ENCODE measurements at regions of chr3 and their contacts with region 1.

Region 1: GRCh38 chr3:106119614-106120082 is 250.8 kb upstream of the CBLB start:
- DNase-seq: no peak
- ATAC-seq: no peak
- H3K4me3 ChIP-seq: no peak overlapping the region
- H3K27ac ChIP-seq: no peak overlapping the region
- H3K4me1 ChIP-seq: no peaks in the 10 kb centered on the region
- H3K27me3 ChIP-seq: no peaks in the 10 kb centered on the region

Region 2: DNA sequence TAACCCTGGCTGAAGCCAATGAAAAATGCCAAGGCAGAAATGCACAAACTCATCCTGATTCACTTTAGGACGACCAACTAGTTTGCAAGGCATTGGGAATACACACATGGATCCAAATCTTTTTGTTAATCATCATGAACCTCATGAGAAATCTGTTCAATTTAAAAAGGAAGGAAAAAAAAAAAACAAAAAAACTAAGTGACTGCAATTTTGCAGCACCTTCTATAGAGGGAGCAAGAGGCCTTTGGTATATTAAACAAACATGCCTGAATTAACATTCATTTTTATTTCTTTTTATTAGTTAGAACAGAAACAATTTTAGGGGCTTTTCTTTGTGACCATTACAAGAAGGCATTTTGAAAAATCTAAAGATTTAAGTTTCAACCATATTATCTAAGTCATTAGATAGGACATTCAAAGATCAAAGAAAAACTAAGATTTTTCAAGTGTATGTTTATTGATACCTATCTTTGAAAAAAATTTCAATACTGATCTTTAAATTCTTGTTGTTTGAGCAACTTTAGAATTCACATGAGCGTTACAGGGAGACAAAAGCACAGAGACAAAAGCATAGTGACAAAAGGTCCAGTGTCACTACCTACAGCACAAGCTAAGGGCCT is 433.3 kb before region 1 on chr3:
- intact Hi-C with region 1: loop called (anchors 10 kb)
- DNase-seq: no peak
- ATAC-seq: no peak
- H3K4me3 ChIP-seq: no peak overlapping the region
- H3K27ac ChIP-seq: no peak overlapping the region
- H3K4me1 ChIP-seq: no peaks in the 10 kb centered on the region
- H3K27me3 ChIP-seq: no peaks in the 10 kb centered on the region

Region 3: GRCh38 chr3:105691633-105692032 is 428.0 kb before region 1 on chr3:
- intact Hi-C with region 1: loop called (anchors 10 kb)
- DNase-seq: no peak
- ATAC-seq: no peak
- H3K4me3 ChIP-seq: no peak overlapping the region
- H3K27ac ChIP-seq: no peak overlapping the region
- H3K4me1 ChIP-seq: no peaks in the 10 kb centered on the region
- H3K27me3 ChIP-seq: no peaks in the 10 kb centered on the region

Region 4: GRCh38 chr3:105868742-105869530 is 250.7 kb before region 1 on chr3 and contains the start of gene CBLB:
- intact Hi-C with region 1: loop called in 1 of 2 experiments (anchors 10 kb)
- DNase-seq: peak; percentile 94 to 97
- ATAC-seq: peak; percentile 97
- H3K4me3 ChIP-seq: peak within 1 kb of the TSS; percentile 61 to 94
- H3K27ac ChIP-seq: peak within 1 kb of the TSS; percentile 51 to 76
- H3K4me1 ChIP-seq: peaks cover 0 to 2% of the 10 kb centered on the region in 2 donors
- H3K27me3 ChIP-seq: no peaks in the 10 kb centered on the region
- total RNA-seq, gene CBLB: 93.3 to 126 TPM